Thyroid gland (tissue), 4 donors: ENCODE measurements at regions of chr17 and their contacts with region 1.

Region 1: GRCh38 chr17:40203131-40203530 is 16.0 kb upstream of the WIPF2 start:
- DNase-seq: no peak
- H3K4me3 ChIP-seq: no peak overlapping the region
- H3K27ac ChIP-seq: no peak overlapping the region
- H3K4me1 ChIP-seq: no peaks in the 10 kb centered on the region
- H3K27me3 ChIP-seq: no peaks in the 10 kb centered on the region
- CTCF ChIP-seq: no peak
- POLR2A ChIP-seq: no peak

Region 2: GRCh38 chr17:38868817-38869525 is 1334.2 kb before region 1 on chr17:
- intact Hi-C with region 1: no loop called
- DNase-seq: peak; percentile 91 to 93
- H3K4me3 ChIP-seq: peak overlapping the region; percentile 87 to 99 (median 92)
- H3K27ac ChIP-seq: peak overlapping the region; percentile 92 to 98 (median 95)
- H3K4me1 ChIP-seq: peaks cover 21 to 40% of the 10 kb centered on the region in 2 donors
- H3K27me3 ChIP-seq: no peaks in the 10 kb centered on the region
- CTCF ChIP-seq: peak in 1 of 6 experiments; percentile 10
- POLR2A ChIP-seq: no peak

Region 3: GRCh38 chr17:40290629-40291287 is 87.6 kb after region 1 on chr17:
- intact Hi-C with region 1: loop called (anchors 5 kb)
- DNase-seq: peak; percentile 45 to 61
- H3K4me3 ChIP-seq: no peak overlapping the region
- H3K27ac ChIP-seq: no peak overlapping the region
- H3K4me1 ChIP-seq: peaks cover 5 to 7% of the 10 kb centered on the region in 2 donors
- H3K27me3 ChIP-seq: no peaks in the 10 kb centered on the region
- CTCF ChIP-seq: peak in 5 of 6 experiments; percentile 26 to 77 (median 71)
- POLR2A ChIP-seq: no peak